Gastrocnemius medialis (tissue), 4 donors: ENCODE measurements at regions of chr11 and their contacts with region 1.

Region 1: DNA sequence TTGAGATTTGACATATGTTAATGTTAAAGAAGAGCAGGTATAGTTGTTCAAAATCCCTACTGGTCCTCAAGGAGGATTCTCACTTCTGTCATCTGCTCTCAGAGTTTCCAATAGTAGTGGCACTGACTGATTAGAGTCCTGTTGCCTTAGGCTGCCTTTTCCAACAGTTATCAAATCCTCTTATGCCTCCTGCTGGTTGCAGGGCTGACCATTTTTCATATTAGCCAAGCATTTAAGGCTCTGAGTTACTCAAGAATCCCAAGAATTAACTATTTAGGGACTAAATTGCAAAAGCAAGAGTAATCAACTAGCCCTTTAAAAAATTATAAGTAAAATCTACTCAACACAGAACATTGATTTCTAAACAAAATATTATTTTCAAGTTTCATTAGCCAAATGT is 212.0 kb upstream of the CHORDC1 start:
- DNase-seq: no peak
- ATAC-seq: no peak
- H3K4me3 ChIP-seq: no peak overlapping the region
- H3K27ac ChIP-seq: no peak overlapping the region
- H3K4me1 ChIP-seq: no peaks in the 10 kb centered on the region
- H3K27me3 ChIP-seq: no peaks in the 10 kb centered on the region
- CTCF ChIP-seq: no peak
- POLR2A ChIP-seq: no peak

Region 2: GRCh38 chr11:90326647-90327046 is 108.2 kb before region 1 on chr11:
- in situ Hi-C with region 1: loop called in 1 of 4 experiments (anchors 25 kb)
- intact Hi-C with region 1: no loop called
- DNase-seq: no peak
- ATAC-seq: no peak
- H3K4me3 ChIP-seq: no peak overlapping the region
- H3K27ac ChIP-seq: no peak overlapping the region
- H3K4me1 ChIP-seq: no peaks in the 10 kb centered on the region
- H3K27me3 ChIP-seq: no peaks in the 10 kb centered on the region
- CTCF ChIP-seq: no peak
- POLR2A ChIP-seq: no peak